GM23248 (cell line): ENCODE measurements at regions of chr1 and their contacts with region 1.

Region 1: GRCh38 chr1:20493839-20494608 is 8.0 kb upstream of the CAMK2N1 start:
- DNase-seq: peak; percentile 93
- H3K4me3 ChIP-seq: peak overlapping the region; percentile 27
- H3K27ac ChIP-seq: peak overlapping the region; percentile 96
- H3K4me1 ChIP-seq: peaks cover 27% of the 10 kb centered on the region
- H3K27me3 ChIP-seq: no peaks in the 10 kb centered on the region

Region 2: GRCh38 chr1:20212685-20213331 is 281.2 kb before region 1 on chr1:
- in situ Hi-C with region 1: loop called (anchors 5 kb)
- DNase-seq: peak; percentile 81
- H3K4me3 ChIP-seq: no peak overlapping the region
- H3K27ac ChIP-seq: no peak overlapping the region
- H3K4me1 ChIP-seq: peaks cover 22% of the 10 kb centered on the region
- H3K27me3 ChIP-seq: peaks cover 16% of the 10 kb centered on the region

Region 3: DNA sequence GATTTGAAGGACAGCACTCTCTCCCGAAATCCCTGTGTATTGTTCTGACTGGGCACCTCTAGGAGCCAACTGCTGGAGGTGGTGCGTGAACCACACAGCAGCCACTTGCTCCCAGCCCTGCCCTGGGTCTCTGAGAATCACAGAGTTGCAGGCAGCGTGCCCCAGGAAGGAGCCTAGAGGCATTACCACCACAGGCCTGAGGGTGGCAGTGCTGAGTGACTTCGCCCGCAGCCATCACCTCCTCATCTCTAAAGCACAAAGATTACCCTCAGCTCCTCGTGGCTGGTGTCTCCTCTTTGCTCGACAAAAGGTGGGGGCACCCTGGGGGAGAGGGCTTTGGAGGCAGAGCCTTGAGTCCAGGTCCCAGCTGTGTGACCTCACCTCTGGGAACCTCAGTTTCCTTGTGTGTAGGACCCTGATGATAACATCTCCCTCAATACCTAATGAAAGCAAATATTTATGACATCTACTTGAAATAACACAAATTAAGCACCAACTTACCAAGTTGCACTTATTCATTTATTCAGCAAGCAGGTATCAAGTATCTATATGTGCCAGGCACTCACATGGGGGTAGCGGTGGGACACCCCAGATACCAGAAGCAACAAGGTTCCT is 117.0 kb before region 1 on chr1:
- in situ Hi-C with region 1: loop called (anchors 5 kb)
- DNase-seq: peak; percentile 67
- H3K4me3 ChIP-seq: no peak overlapping the region
- H3K27ac ChIP-seq: no peak overlapping the region
- H3K4me1 ChIP-seq: peaks cover 21% of the 10 kb centered on the region
- H3K27me3 ChIP-seq: no peaks in the 10 kb centered on the region